Activated CD4-positive, alpha-beta T cell treated with anti-CD3 and anti-CD28 coated beads for 36 hours (primary cell): ENCODE measurements at regions of chr1 and their contacts with region 1.

Region 1: GRCh38 chr1:64823691-64824476 is 79.0 kb downstream of the RAVER2 start:
- DNase-seq: peak; percentile 74
- ATAC-seq: no peak
- H3K4me3 Mint-ChIP-seq: no peak overlapping the region
- H3K27ac Mint-ChIP-seq: peak overlapping the region; percentile 27
- H3K4me1 Mint-ChIP-seq: peaks cover 31% of the 10 kb centered on the region
- H3K27me3 Mint-ChIP-seq: no peaks in the 10 kb centered on the region

Region 2: GRCh38 chr1:64302971-64303370 is 520.9 kb before region 1 on chr1:
- CTCF ChIA-PET with region 1: no interaction called
- POLR2A ChIA-PET with region 1: no interaction called
- intact Hi-C with region 1: no loop called
- DNase-seq: no peak
- ATAC-seq: no peak
- H3K4me3 Mint-ChIP-seq: no peak overlapping the region
- H3K27ac Mint-ChIP-seq: no peak overlapping the region
- H3K4me1 Mint-ChIP-seq: no peaks in the 10 kb centered on the region
- H3K27me3 Mint-ChIP-seq: peaks cover 1% of the 10 kb centered on the region

Region 3: GRCh38 chr1:64469977-64470664 is 353.8 kb before region 1 on chr1 and contains the start of gene CACHD1:
- CTCF ChIA-PET with region 1: no interaction called
- POLR2A ChIA-PET with region 1: no interaction called
- intact Hi-C with region 1: loop called in 1 of 2 experiments (anchors 10 kb)
- DNase-seq: peak; percentile 89
- ATAC-seq: peak; percentile 88
- H3K4me3 Mint-ChIP-seq: peak within 1 kb of the TSS; percentile 82
- H3K27ac Mint-ChIP-seq: peak within 1 kb of the TSS; percentile 77
- H3K4me1 Mint-ChIP-seq: peaks cover 16% of the 10 kb centered on the region
- H3K27me3 Mint-ChIP-seq: peaks cover 32% of the 10 kb centered on the region
- total RNA-seq, gene CACHD1: 1.9 to 2.3 TPM

Region 4: DNA sequence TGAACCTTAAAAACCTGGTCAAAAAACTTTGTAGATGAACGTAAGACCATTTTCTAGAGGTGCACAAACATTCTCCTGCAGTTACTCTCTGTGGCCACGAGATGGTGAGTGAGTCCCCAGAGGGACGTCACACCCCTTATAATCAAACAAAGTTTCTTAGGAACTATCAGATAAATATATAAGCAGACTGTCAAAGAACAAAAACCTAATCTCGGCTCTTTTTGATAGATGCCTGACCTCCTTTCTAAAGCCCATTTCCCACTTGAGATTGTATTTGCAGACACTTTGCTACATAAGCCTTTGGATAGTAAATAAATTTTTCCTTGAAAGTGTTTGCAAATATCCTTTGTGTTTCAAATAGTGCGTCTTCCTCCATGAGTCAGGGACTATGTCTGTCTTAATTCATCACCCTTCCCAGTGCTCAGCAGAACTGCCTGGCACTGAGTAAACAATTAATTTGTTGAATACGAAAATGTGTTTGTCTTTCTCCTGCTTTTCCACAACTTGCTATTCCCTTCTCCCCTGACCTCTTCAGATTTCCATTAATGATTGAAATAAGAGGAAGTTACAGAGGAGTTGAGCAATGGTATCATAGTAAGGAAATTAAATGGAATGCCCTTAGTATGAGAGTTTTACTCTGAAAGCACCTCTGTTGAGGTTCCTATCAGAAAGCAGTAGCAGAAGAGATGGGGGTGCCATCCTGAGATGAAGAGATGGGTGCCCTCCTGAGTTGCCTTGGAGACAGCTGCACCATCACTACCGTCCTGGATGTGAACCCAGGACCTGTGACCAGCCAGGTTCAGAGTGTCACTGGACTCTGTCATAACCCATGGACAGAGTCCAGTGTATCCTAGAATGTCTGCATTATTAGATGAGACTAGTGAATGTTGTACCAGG is 136.8 kb before region 1 on chr1:
- CTCF ChIA-PET with region 1: interaction called, 5 read pairs
- POLR2A ChIA-PET with region 1: no interaction called
- intact Hi-C with region 1: loop called (anchors 1 kb)
- DNase-seq: peak; percentile 51
- ATAC-seq: peak; percentile 76
- H3K4me3 Mint-ChIP-seq: no peak overlapping the region
- H3K27ac Mint-ChIP-seq: no peak overlapping the region
- H3K4me1 Mint-ChIP-seq: peaks cover 5% of the 10 kb centered on the region
- H3K27me3 Mint-ChIP-seq: no peaks in the 10 kb centered on the region

Region 5: DNA sequence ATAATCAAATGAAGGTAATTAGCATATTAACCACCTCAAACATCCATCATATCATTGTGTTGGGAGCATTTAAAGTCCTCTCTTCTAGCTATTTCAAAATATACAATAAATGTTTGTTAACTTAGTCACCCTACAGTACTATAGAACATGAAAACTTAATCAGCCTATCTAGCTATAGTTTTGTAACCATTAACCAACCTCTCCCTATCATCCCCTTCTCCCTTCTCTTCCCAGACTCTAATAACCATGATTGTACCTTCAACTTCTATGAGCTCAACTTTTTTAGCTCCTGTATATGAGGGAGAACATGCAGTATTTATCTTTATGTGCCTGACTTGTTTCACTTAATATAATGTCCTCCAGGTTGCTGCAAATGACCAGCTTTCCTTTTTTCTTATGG is 25.0 kb before region 1 on chr1:
- CTCF ChIA-PET with region 1: no interaction called
- POLR2A ChIA-PET with region 1: no interaction called
- intact Hi-C with region 1: no loop called
- DNase-seq: no peak
- ATAC-seq: no peak
- H3K4me3 Mint-ChIP-seq: no peak overlapping the region
- H3K27ac Mint-ChIP-seq: no peak overlapping the region
- H3K4me1 Mint-ChIP-seq: no peaks in the 10 kb centered on the region
- H3K27me3 Mint-ChIP-seq: no peaks in the 10 kb centered on the region

Region 6: GRCh38 chr1:64956733-64957441 is 133.0 kb after region 1 on chr1:
- CTCF ChIA-PET with region 1: no interaction called
- POLR2A ChIA-PET with region 1: no interaction called
- intact Hi-C with region 1: loop called (anchors 5 kb)
- DNase-seq: peak; percentile 75
- ATAC-seq: peak; percentile 87
- H3K4me3 Mint-ChIP-seq: no peak overlapping the region
- H3K27ac Mint-ChIP-seq: no peak overlapping the region
- H3K4me1 Mint-ChIP-seq: peaks cover 61% of the 10 kb centered on the region
- H3K27me3 Mint-ChIP-seq: no peaks in the 10 kb centered on the region

Region 7: GRCh38 chr1:65075123-65075976 is 251.5 kb after region 1 on chr1:
- CTCF ChIA-PET with region 1: interaction called, 11 read pairs
- POLR2A ChIA-PET with region 1: no interaction called
- intact Hi-C with region 1: no loop called
- DNase-seq: peak; percentile 77
- ATAC-seq: peak; percentile 92
- H3K4me3 Mint-ChIP-seq: no peak overlapping the region
- H3K27ac Mint-ChIP-seq: no peak overlapping the region
- H3K4me1 Mint-ChIP-seq: peaks cover 20% of the 10 kb centered on the region
- H3K27me3 Mint-ChIP-seq: peaks cover 3% of the 10 kb centered on the region